Heart right ventricle (tissue), 16 donors: ENCODE measurements at regions of chr5 and their contacts with region 1.

Region 1: GRCh38 chr5:19547640-19548039 is 440.4 kb downstream of the CDH18 start:
- DNase-seq: peak in 1 of 2 donors; percentile 3
- ATAC-seq: peak in 1 of 8 donors; percentile 23
- H3K4me3 ChIP-seq: no peak overlapping the region
- H3K27ac ChIP-seq: no peak overlapping the region
- H3K4me1 ChIP-seq: no peaks in the 10 kb centered on the region
- H3K27me3 ChIP-seq: no peaks in the 10 kb centered on the region
- CTCF ChIP-seq: no peak

Region 2: DNA sequence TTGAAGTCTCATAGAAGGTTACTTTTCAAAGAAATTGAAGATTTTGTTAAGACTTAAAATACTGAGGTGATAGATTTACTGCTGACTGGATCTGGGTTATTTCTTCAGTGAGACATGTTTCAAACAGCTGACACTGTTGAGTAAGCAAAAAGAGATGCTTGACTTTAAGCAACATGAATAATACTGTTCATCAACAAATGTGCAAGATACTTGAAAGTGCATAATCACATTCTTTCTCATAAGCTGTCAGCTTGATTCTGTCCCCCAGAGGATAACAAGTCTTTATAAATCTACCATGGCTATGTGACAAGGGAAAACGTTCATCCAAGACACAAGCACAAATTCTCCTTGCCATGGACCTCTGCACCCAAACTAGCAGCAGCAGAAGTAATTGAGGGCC is 700.5 kb after region 1 on chr5:
- intact Hi-C with region 1: loop called in 1 of 10 experiments (anchors 5 kb)
- DNase-seq: no peak
- ATAC-seq: no peak
- H3K4me3 ChIP-seq: no peak overlapping the region
- H3K27ac ChIP-seq: no peak overlapping the region
- H3K4me1 ChIP-seq: no peaks in the 10 kb centered on the region
- H3K27me3 ChIP-seq: no peaks in the 10 kb centered on the region
- CTCF ChIP-seq: no peak